BJ (cell line): ENCODE measurements at regions of chr2 and their contacts with region 1.

Region 1: GRCh38 chr2:85772019-85772745 is 18.4 kb downstream of the ATOH8 start:
- DNase-seq: peak; percentile 99
- H3K4me3 ChIP-seq: no peak overlapping the region; the same call in 1 of the 2 replicates
- H3K27me3 ChIP-seq: no peaks in the 10 kb centered on the region
- CTCF ChIP-seq: peak; percentile 32; the same call in 1 of the 2 replicates

Region 2: GRCh38 chr2:85741833-85742455 is 30.2 kb before region 1 on chr2:
- CTCF ChIA-PET with region 1: interaction called, 15 read pairs
- POLR2A ChIA-PET with region 1: interaction called, 6 read pairs
- DNase-seq: no peak
- H3K4me3 ChIP-seq: no peak overlapping the region; the same call in 1 of the 2 replicates
- H3K27me3 ChIP-seq: no peaks in the 10 kb centered on the region
- CTCF ChIP-seq: peak; percentile 13; the same call in 1 of the 2 replicates

Region 3: GRCh38 chr2:85750587-85751575 is 21.3 kb before region 1 on chr2:
- CTCF ChIA-PET with region 1: interaction called, 65 read pairs
- POLR2A ChIA-PET with region 1: interaction called, 6 read pairs
- DNase-seq: no peak
- H3K4me3 ChIP-seq: no peak overlapping the region
- H3K27me3 ChIP-seq: no peaks in the 10 kb centered on the region
- CTCF ChIP-seq: peak; percentile 90

Region 4: DNA sequence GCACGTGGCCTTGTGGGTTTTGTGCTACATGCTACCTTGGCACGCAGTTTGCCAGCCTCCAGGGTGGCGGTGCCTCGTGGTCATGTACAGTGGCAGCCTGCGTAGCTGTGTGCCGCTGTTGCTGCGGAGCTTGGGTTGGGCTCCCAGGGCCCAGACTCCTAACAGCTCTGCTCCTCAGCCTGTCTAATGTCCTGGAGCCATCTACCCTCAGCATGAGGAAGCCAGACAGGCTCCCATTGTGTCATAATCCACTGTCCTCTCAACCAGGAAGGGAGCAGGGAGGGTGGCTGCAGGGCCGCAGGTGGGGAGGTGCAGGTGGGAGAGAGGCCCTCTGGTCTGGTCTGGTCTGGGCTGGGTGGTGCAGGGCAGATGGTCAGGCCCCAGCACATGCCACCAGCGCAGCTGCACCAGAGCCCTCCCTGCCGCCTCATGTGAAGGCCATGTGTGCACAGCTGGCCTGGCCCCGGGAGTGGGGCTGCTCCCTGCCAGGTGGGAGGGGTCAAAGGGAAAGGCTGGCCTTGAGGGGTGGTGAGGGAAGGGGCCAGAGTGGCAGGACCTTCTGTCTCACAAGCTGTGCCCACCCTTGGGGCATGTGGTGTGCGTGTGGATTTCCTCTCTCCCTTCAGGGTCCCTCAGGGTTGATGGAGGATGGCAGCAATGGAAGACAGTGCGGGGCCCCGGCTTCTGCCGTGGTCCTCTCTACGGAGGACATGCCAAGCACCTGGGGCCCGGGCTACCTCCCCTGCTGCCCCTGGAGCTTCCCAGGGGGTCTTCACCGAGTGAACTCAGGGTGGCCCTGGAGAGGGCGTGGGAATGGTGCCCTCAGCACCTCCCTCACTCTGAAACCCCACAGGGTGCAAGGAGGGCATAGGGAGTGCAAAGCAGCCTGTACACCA is 13.6 kb before region 1 on chr2:
- CTCF ChIA-PET with region 1: interaction called, 65 read pairs
- POLR2A ChIA-PET with region 1: interaction called, 3 read pairs
- DNase-seq: no peak
- H3K4me3 ChIP-seq: no peak overlapping the region
- H3K27me3 ChIP-seq: no peaks in the 10 kb centered on the region
- CTCF ChIP-seq: no peak